ENCODE measurements at regions of chr1 and their contacts with region 1.

Region 1: GRCh38 chr1:24688621-24689195 is 45.6 kb downstream of the SRRM1 start:
- DNase-seq: no peak
- H3K4me3 ChIP-seq: no peak overlapping the region
- H3K27ac ChIP-seq: no peak overlapping the region
- H3K4me1 ChIP-seq: peaks cover 14 to 23% (median 19%) of the 10 kb centered on the region in 4 donors
- H3K27me3 ChIP-seq: no peaks in the 10 kb centered on the region
- CTCF ChIP-seq: peak; percentile 83 to 86 (median 85)
- EP300 ChIP-seq: no peak
- POLR2A ChIP-seq: no peak

Region 2: GRCh38 chr1:24830680-24831272 is 142.1 kb after region 1 on chr1:
- intact Hi-C with region 1: loop called (anchors 2 kb)
- DNase-seq: no peak
- H3K4me3 ChIP-seq: no peak overlapping the region
- H3K27ac ChIP-seq: peak overlapping the region in 1 of 4 donors; percentile 52
- H3K4me1 ChIP-seq: peaks cover 55 to 67% (median 65%) of the 10 kb centered on the region in 4 donors
- H3K27me3 ChIP-seq: no peaks in the 10 kb centered on the region
- CTCF ChIP-seq: peak; percentile 81 to 86 (median 83)
- EP300 ChIP-seq: no peak
- POLR2A ChIP-seq: no peak

Region 3: GRCh38 chr1:25503551-25504426 is 815.1 kb after region 1 on chr1:
- intact Hi-C with region 1: no loop called
- DNase-seq: no peak
- H3K4me3 ChIP-seq: no peak overlapping the region
- H3K27ac ChIP-seq: peak overlapping the region in 1 of 4 donors; percentile 15
- H3K4me1 ChIP-seq: peaks cover 10 to 34% (median 30%) of the 10 kb centered on the region in 4 donors
- H3K27me3 ChIP-seq: no peaks in the 10 kb centered on the region
- CTCF ChIP-seq: peak; percentile 37 to 53 (median 46)
- EP300 ChIP-seq: no peak
- POLR2A ChIP-seq: no peak